ENCODE measurements at regions of chr5 and their contacts with region 1.

Region 1: GRCh38 chr5:147699496-147700088 is 82.9 kb downstream of the JAKMIP2 start:
- DNase-seq: no peak
- ATAC-seq: no peak
- H3K4me3 ChIP-seq: no peak overlapping the region
- H3K27ac ChIP-seq: no peak overlapping the region
- H3K4me1 ChIP-seq: no peaks in the 10 kb centered on the region
- H3K27me3 ChIP-seq: no peaks in the 10 kb centered on the region
- CTCF ChIP-seq: no peak
- EP300 ChIP-seq: no peak
- POLR2A ChIP-seq: no peak
- RAD21 ChIP-seq: no peak

Region 2: GRCh38 chr5:147809830-147810666 is 110.5 kb after region 1 on chr5:
- CTCF ChIA-PET with region 1: no interaction called
- POLR2A ChIA-PET with region 1: no interaction called
- in situ Hi-C with region 1: no loop called
- intact Hi-C with region 1: loop called (anchors 10 kb)
- DNase-seq: no peak
- ATAC-seq: no peak
- H3K4me3 ChIP-seq: no peak overlapping the region
- H3K27ac ChIP-seq: no peak overlapping the region
- H3K4me1 ChIP-seq: no peaks in the 10 kb centered on the region
- H3K27me3 ChIP-seq: no peaks in the 10 kb centered on the region
- CTCF ChIP-seq: no peak
- EP300 ChIP-seq: no peak
- POLR2A ChIP-seq: no peak
- RAD21 ChIP-seq: no peak